Activated B cell treated with CpG ODN at 0.5 μM for 24 hours (primary cell): ENCODE measurements at regions of chr2 and their contacts with region 1.

Region 1: DNA sequence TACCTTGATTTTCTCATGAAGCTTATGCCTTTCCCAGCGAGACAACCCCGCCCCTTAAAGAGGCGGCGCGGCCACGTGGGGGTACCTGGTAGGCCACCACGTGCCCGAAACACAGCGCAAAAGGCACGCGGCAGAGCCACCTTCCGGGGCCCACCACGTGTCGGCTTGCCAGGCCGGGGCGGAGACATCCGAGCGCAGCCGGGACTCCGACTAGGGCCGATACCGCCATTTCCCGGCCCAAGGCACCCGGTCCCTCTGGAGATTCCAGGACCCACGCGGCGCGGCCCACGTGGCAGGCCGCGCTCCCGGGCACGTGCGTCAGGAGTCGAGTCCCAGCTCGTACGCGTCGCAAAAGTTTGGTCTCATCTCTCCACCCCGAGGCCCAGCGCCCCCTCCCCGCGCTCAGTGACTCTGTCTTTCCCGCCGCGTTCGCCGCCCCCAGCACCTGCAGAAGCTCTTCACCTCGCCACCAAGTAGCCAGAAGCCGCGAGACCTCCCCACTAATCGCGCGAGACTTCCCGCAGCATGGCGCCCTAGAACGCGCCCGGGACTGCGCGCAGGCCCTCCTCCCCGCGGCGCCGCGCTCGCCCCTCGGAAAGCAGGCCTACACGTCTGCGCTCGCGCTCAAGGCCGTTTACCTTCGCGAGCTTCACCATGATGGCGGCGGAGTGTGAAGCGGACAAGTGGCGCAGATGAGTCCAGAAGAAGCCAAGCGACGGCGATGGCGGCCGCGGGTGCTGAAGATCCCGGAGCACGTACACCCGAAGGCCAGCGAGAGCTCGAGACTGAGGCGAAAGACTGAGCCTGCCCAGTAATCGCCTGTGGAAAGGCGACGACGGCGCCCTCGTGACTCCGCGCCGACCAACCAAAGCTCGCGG is at the start of gene NCL:
- DNase-seq: peak; percentile 71
- ATAC-seq: peak; percentile 54
- H3K4me3 Mint-ChIP-seq: peak within 1 kb of the TSS; percentile 98
- H3K27ac Mint-ChIP-seq: peak within 1 kb of the TSS; percentile 100
- H3K4me1 Mint-ChIP-seq: peaks cover 39% of the 10 kb centered on the region
- H3K27me3 Mint-ChIP-seq: no peaks in the 10 kb centered on the region
- CTCF ChIP-seq: no peak
- total RNA-seq, gene NCL: 693 and 761 TPM in 2 replicates

Region 2: DNA sequence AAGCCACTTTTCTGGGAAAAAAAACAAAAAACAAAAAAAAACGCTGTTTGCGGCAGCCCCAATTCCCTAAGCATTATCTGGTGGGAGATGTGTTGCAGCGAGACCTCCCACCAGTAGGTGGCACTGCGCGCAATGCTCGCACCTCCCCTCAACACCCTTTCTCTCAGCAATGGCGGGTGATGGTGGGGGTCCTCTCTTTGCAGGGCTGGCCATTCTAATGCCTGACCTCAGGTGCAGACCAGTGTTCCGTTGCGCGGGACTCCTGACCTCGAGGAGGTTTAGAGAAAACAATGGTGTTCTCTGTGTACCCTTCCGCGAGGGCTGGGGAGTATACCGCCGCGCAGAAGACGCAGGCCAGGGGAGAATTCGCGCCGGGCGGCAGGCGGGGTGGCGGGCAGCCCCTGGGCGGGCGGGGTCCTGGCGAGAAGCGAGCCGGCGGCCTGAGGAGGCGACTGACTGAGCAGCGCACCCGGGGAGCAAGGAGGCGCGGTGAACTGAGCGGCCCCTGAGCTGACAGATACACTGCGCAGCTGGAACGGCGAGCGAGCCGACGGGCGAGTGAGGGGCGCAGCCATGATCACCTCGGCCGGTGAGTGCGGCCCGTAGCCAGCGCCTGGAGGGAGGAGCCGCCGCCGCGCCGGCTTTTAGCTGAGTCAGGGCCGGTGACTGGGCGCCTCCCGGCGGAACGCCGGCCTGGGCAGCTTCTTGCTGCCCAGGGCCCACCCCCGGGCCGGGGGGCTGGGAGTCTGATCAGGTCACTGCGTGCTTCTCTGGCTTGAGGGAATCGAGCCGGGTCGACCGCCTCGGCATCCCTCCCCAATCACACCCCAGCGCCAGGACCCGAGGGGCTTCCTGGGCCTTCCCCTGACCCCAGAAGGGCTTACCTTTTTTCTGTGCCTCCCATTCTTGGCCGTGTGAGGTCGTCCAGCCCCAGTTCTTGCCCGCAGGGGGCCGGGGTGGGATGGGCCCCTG is 407.2 kb before region 1 on chr2 and contains the start of gene PSMD1:
- CTCF ChIA-PET with region 1: interaction called, 3 read pairs
- POLR2A ChIA-PET with region 1: interaction called, 7 read pairs
- intact Hi-C with region 1: loop called (anchors 5 kb)
- DNase-seq: peak; percentile 90
- ATAC-seq: peak; percentile 85
- H3K4me3 Mint-ChIP-seq: peak within 1 kb of the TSS; percentile 98
- H3K27ac Mint-ChIP-seq: peak within 1 kb of the TSS; percentile 100
- H3K4me1 Mint-ChIP-seq: peaks cover 43% of the 10 kb centered on the region
- H3K27me3 Mint-ChIP-seq: peaks cover 3% of the 10 kb centered on the region
- CTCF ChIP-seq: peak; percentile 65
- total RNA-seq, gene PSMD1: 99.9 and 105 TPM in 2 replicates

Region 3: GRCh38 chr2:231475965-231476364 is 12.0 kb after region 1 on chr2:
- CTCF ChIA-PET with region 1: interaction called, 36 read pairs
- POLR2A ChIA-PET with region 1: interaction called, 89 read pairs
- intact Hi-C with region 1: no loop called
- DNase-seq: no peak
- ATAC-seq: no peak
- H3K4me3 Mint-ChIP-seq: no peak overlapping the region
- H3K27ac Mint-ChIP-seq: no peak overlapping the region
- H3K4me1 Mint-ChIP-seq: no peaks in the 10 kb centered on the region
- H3K27me3 Mint-ChIP-seq: no peaks in the 10 kb centered on the region
- CTCF ChIP-seq: no peak

Region 4: DNA sequence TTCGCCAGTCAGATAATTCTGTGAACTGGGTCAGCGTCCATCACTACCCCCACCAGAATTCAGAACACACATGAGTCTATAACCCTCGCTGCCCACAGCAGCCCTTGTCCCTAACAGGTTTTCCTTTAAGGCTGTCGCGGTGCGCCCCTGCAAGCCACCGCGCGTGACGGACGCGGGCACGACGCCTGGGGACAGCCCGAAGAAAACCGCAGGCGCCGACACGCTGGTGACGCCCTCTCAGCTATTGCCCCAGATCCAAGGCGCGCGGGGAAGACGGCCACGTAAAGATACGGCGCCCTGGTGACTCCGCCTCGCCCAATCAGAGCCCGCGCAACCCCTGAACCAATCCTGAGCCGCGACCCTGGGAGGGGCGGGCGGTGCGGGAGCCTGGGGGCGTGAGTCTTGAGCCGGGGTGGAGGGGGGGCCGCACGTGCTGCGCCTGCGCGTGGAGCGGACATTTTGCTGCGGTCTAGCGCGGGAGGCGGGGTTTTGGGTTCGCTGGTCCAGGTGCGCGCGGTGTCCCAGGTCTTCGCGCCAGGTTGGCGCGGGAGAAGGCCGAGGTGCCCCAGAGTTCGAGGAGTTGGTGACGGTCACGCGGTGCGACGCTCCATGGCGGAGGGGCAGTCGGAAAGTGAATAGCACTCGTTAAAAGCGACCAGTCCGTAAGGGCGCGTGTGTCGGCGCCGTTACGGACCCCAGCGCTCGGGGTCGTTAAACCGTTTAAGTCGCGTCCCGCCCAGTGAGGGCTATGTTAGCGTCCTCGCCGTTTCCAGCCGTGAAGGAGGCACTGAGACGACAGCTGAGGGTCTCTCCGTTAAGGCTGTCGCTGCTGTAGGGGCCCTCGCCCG is 50.4 kb after region 1 on chr2:
- CTCF ChIA-PET with region 1: interaction called, 4 read pairs
- POLR2A ChIA-PET with region 1: interaction called, 50 read pairs
- intact Hi-C with region 1: loop called (anchors 1 kb)
- DNase-seq: peak; percentile 97
- ATAC-seq: peak; percentile 99
- H3K4me3 Mint-ChIP-seq: peak overlapping the region; percentile 92
- H3K27ac Mint-ChIP-seq: peak overlapping the region; percentile 96
- H3K4me1 Mint-ChIP-seq: peaks cover 13% of the 10 kb centered on the region
- H3K27me3 Mint-ChIP-seq: no peaks in the 10 kb centered on the region
- CTCF ChIP-seq: no peak

Region 5: DNA sequence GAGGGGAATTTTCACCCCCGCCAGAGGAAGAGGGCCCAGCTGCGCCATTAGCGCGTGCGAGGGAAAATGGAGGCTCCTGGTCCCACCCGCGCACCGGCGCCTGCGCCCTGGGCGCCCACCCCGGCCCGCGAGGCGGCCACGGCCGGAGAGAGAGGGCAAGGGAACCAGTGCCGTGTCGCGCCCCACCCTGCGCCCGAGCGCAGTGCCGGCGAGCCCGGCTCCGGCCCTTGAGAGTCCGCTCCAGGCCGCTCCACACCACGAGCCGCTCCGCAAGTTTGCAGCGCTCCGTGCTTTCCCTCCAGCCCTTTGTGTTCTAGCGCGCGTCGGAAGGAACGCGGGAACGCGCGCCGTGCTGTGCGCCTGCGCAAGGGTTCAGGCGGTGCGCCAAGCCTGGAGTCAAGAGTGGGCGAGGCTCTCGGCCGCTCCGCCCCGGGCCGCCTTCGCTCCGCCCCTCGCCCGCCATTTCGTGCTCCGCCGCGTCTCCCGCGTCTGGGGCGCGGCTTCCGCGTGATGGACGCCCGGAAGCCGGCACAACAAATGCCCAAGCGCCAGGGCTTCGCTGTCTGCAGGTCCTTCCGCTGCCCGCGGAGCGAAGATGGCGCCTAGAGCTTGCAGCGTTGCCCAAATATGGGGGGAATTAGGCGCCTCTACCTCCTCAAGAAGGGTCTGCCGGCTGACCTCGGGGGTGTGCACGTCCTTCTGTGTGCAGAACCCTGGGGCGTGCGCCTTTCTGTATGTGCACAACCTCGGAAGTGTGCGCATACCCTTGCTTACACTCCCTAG is 198.3 kb after region 1 on chr2:
- CTCF ChIA-PET with region 1: no interaction called
- POLR2A ChIA-PET with region 1: interaction called, 6 read pairs
- intact Hi-C with region 1: loop called (anchors 1 kb)
- DNase-seq: peak; percentile 97
- ATAC-seq: peak; percentile 78
- H3K4me3 Mint-ChIP-seq: peak overlapping the region; percentile 74
- H3K27ac Mint-ChIP-seq: peak overlapping the region; percentile 92
- H3K4me1 Mint-ChIP-seq: peaks cover 67% of the 10 kb centered on the region
- H3K27me3 Mint-ChIP-seq: no peaks in the 10 kb centered on the region
- CTCF ChIP-seq: no peak

Region 6: DNA sequence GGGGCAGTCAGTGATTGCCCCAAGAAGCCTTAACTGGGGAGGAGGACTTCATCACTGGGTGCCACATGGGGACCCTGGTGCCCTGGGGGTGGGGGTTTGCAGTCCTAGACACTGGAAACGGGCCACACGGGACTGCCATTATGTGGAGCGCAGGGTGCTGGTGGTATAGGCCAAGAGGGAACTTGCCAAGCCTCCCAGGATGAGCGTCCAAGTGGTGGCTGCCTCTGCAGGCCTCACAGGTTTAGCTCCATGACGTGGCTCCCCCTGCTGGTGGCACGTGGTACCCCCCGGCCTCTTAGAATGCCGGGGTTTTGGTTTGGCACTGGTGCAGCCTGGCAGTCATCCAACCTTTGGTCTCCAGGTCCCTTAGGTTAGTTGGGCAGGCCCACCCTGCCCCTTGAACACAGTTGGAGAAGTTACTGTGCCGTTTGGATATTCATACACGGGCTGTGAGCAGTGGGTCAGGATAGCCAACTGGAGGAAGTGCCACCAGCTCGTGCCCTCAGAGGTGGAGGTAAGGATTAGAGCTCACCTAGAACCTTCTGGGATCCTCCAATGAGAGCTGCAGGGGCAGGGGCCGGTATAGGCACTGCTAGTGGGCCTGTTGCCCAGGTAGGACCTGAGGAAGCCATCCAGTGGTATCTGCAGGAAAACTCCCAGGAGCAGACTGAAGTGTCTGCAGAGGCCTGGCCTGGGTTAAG is 249.9 kb after region 1 on chr2:
- CTCF ChIA-PET with region 1: no interaction called
- POLR2A ChIA-PET with region 1: interaction called, 40 read pairs
- intact Hi-C with region 1: no loop called
- DNase-seq: peak; percentile 82
- ATAC-seq: peak; percentile 15
- H3K4me3 Mint-ChIP-seq: peak overlapping the region; percentile 55
- H3K27ac Mint-ChIP-seq: peak overlapping the region; percentile 91
- H3K4me1 Mint-ChIP-seq: peaks cover 70% of the 10 kb centered on the region
- H3K27me3 Mint-ChIP-seq: no peaks in the 10 kb centered on the region
- CTCF ChIP-seq: no peak